Ascending aorta (tissue), 2 donors: ENCODE measurements at regions of chr2 and their contacts with region 1.

Region 1: GRCh38 chr2:28102455-28102874 is 211.9 kb downstream of the BABAM2 start:
- DNase-seq: no peak
- H3K4me3 ChIP-seq: peak overlapping the region; percentile 5 to 18
- H3K27ac ChIP-seq: peak overlapping the region; percentile 74 to 75
- H3K4me1 ChIP-seq: peaks cover 3 to 34% of the 10 kb centered on the region in 2 donors
- H3K27me3 ChIP-seq: no peaks in the 10 kb centered on the region
- CTCF ChIP-seq: no peak

Region 2: DNA sequence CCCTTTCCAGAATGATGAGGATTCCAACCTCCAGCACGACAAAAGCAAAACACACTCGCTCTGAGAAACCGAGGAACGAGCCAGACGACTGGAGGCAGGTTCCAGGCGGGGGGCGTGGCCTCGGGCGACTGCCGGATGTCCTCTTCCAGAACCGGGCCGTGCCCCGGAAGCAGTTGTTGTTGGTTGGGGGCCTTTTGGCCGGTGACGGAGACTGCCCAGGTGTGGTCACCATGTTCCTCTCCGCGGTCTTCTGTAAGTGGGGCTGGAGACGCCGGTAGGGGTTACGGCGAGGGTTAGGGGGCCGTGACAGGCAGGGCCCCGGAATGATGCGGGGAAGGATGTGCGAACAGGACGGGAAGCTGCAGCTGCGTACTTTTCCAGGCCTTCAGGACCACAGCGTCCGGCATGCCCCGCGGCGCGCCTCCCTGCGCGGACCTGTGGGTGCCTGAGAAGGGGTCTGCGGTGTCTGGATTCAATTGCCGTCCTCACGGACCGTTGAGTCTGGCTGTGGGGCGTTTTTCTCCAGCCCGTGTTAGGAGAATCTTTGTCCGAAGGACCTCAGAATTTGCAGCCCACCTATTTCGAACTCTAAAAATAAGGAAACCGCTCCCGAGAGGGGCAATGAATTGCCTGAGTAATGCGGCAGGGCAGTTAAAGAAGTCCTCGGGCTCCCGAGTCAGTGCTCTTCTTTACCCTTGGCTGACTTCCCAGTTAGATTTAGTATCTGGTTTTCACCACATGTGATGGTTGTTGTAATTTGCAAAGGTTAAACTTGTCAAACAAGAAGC is 330.7 kb before region 1 on chr2 and contains the start of gene MRPL33:
- intact Hi-C with region 1: loop called (anchors 10 kb)
- DNase-seq: peak; percentile 83 to 97
- H3K4me3 ChIP-seq: peak within 1 kb of the TSS; percentile 80 to 92
- H3K27ac ChIP-seq: peak within 1 kb of the TSS; percentile 90 to 96
- H3K4me1 ChIP-seq: peaks cover 9 to 22% of the 10 kb centered on the region in 2 donors
- H3K27me3 ChIP-seq: no peaks in the 10 kb centered on the region
- CTCF ChIP-seq: no peak
- total RNA-seq, gene MRPL33: 3.4 TPM

Region 3: DNA sequence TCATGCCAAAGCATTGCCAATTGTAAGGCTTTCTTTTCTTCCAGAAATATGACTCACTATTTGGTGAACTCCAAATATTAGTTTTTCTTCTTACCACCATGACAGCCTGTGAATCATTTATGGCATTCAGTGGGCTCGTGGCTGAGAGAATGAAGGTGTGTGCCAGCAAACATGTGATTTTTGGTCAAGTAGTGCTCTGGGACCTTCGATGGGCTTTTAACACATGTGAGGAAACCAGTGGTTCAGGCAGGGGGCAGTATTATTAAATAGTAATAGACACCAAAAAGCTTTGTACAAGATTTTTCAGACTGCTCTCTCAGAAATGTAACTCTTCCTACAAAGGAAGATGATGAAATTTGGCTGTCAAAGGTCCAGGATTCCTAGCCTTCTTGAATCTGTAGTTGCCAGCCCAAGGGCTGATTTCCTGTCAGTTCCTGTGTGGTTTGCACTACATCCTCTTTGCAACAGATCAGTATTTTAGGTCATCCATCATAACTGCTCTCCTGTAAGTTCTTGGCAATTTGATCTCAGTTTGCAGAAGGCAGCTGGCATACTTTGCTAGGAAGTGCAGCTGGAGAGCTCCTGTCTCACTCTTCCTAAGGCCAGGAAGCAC is 147.6 kb before region 1 on chr2:
- intact Hi-C with region 1: loop called (anchors 5 kb)
- DNase-seq: peak; percentile 51 to 89
- H3K4me3 ChIP-seq: no peak overlapping the region
- H3K27ac ChIP-seq: peak overlapping the region; percentile 71 to 77
- H3K4me1 ChIP-seq: peaks cover 19 to 34% of the 10 kb centered on the region in 2 donors
- H3K27me3 ChIP-seq: no peaks in the 10 kb centered on the region
- CTCF ChIP-seq: peak in 2 of 3 experiments; percentile 16 to 46

Region 4: GRCh38 chr2:28175028-28175427 is 72.6 kb after region 1 on chr2:
- intact Hi-C with region 1: no loop called
- DNase-seq: no peak
- H3K4me3 ChIP-seq: no peak overlapping the region
- H3K27ac ChIP-seq: no peak overlapping the region
- H3K4me1 ChIP-seq: no peaks in the 10 kb centered on the region
- H3K27me3 ChIP-seq: no peaks in the 10 kb centered on the region
- CTCF ChIP-seq: no peak

Region 5: DNA sequence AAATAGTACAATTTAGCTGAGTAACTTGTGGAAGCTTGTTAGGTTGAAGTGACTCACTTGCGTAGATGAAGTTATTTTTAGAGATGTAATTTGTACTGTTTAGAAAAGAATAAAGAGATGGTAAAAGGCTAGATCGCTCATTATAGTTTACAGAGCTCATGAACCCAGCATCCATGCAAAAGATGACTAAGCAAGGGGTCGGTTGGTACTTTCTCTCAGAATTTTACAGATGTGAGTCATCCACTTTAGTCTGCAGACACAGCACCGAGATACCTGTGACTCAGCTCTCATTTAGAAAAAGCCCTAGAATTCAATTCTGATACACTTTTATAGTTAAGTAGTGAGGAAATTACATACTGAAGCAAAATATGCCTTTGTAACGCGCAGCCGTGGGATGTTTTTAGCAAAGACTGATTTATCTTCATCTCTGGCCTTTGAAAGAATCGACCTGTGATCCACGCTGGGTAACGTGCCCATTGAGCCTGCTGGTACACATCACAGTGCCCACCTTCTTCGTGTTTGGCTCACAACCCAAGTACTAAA is 173.7 kb after region 1 on chr2:
- intact Hi-C with region 1: loop called (anchors 10 kb)
- DNase-seq: peak in 1 of 2 donors; percentile 67
- H3K4me3 ChIP-seq: no peak overlapping the region
- H3K27ac ChIP-seq: peak overlapping the region; percentile 59 to 80
- H3K4me1 ChIP-seq: peaks cover 10 to 20% of the 10 kb centered on the region in 2 donors
- H3K27me3 ChIP-seq: no peaks in the 10 kb centered on the region
- CTCF ChIP-seq: no peak